ENCODE measurements at regions of chr19 and their contacts with region 1.

Region 1: GRCh38 chr19:5057861-5058260 is 88.9 kb downstream of the KDM4B start:
- DNase-seq: peak; percentile 12
- H3K4me3 ChIP-seq: no peak overlapping the region
- H3K27ac ChIP-seq: no peak overlapping the region
- H3K4me1 ChIP-seq: peaks cover 12% of the 10 kb centered on the region
- H3K27me3 ChIP-seq: no peaks in the 10 kb centered on the region
- CTCF ChIP-seq: no peak

Region 2: DNA sequence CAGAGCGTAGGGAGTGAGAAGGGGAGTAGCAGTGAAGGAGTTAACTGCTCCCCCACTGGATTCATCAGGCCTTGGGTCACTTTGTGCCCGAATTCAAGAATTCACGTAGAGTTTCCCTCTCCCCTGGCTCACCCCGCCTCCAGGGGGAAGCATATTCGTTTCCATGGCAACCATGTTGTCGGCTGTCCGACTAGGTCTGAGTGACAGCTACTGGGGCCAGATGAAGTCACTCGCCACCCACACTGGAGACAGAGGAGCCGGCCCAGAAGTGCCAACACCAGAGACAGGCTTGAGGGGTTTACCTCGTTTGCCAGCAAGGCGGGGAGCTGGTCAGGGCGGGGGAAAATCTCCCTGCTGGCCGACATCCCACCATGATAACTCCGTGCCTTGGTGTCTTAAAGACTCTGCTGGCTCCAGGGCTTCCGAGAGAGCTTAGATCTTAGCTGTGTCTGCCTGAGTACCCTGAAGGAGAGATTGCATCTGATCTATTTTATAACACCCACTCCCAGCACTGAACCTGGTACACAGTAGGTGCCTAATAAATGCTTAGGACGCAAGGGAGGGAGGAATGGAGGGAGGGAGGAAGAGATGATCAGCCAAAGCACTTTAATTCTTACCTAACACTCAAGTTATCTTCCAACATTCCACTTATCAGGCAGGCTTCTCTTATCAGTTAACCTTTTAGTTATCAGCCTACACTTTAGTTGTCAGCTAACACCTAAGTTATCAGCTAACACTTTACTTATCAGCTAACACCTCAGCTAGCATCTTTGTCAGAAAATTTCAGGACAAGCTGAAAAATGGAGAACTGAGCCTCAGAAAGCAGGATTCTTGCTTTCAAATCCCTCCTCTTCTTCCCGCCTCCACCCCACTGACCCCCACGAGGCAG is 340.2 kb after region 1 on chr19:
- CTCF ChIA-PET with region 1: no interaction called
- dilution Hi-C with region 1: loop called (anchors 10 kb)
- in situ Hi-C with region 1: no loop called
- intact Hi-C with region 1: no loop called
- DNase-seq: no peak
- H3K4me3 ChIP-seq: no peak overlapping the region
- H3K27ac ChIP-seq: no peak overlapping the region
- H3K4me1 ChIP-seq: no peaks in the 10 kb centered on the region
- H3K27me3 ChIP-seq: no peaks in the 10 kb centered on the region
- CTCF ChIP-seq: no peak

Region 3: GRCh38 chr19:5452594-5453565 is 395.0 kb after region 1 on chr19:
- CTCF ChIA-PET with region 1: no interaction called
- dilution Hi-C with region 1: loop called (anchors 10 kb)
- in situ Hi-C with region 1: no loop called
- intact Hi-C with region 1: no loop called
- DNase-seq: no peak
- H3K4me3 ChIP-seq: no peak overlapping the region
- H3K27ac ChIP-seq: no peak overlapping the region
- H3K4me1 ChIP-seq: no peaks in the 10 kb centered on the region
- H3K27me3 ChIP-seq: peaks cover 5% of the 10 kb centered on the region
- CTCF ChIP-seq: no peak